OCI-LY7 (cell line): ENCODE measurements at regions of chr3 and their contacts with region 1.

Region 1: GRCh38 chr3:57017459-57017845 is 43.0 kb upstream of the SPATA12 start:
- DNase-seq: peak; percentile 23
- H3K4me3 ChIP-seq: peak overlapping the region; percentile 50
- H3K27ac ChIP-seq: peak overlapping the region; percentile 95
- H3K4me1 ChIP-seq: peaks cover 85% of the 10 kb centered on the region
- CTCF ChIP-seq: no peak

Region 2: GRCh38 chr3:56970461-56970879 is 47.0 kb before region 1 on chr3:
- CTCF ChIA-PET with region 1: no interaction called
- POLR2A ChIA-PET with region 1: interaction called, 3 read pairs
- intact Hi-C with region 1: loop called (anchors 2 kb)
- DNase-seq: peak; percentile 46
- H3K4me3 ChIP-seq: no peak overlapping the region
- H3K27ac ChIP-seq: peak overlapping the region; percentile 44
- H3K4me1 ChIP-seq: peaks cover 32% of the 10 kb centered on the region
- CTCF ChIP-seq: no peak

Region 3: DNA sequence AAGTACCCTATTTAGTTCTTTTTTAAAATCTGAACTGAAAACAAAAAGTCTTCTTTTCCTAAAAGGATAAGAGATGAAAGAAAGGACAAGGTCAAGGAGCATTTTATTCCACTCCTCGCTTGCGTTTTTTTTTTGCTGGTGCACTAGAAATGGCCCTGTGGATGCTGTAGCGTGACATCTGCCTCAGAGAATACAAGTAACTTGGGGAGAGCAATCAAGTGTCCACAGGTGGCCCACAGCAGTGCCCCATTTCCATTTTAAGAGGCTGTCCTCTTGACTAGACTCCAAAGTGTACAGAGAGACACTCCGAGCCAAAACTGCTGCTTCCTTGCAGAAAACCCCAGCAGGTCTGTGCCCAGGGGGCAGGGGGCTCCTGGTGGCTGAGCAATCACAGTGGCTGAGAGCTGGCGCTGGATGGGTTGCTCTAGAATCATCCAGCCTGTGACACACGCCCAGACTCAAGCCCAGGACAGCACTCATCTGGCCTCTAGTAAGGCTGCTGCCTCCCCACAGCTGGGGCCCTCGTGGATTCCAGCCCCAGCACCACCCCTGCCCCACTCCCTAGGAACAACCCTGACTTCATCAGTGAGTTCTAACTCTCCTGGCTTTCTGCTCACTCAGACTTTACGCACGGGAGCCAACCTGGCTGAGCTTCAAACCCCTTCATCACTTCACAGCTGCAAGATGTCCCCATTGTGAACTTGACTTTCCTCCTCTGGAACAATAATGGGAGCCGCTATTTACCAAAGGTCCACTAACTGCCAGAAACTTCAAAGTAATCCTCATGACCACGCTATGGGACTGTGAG is 28.1 kb before region 1 on chr3:
- CTCF ChIA-PET with region 1: no interaction called
- POLR2A ChIA-PET with region 1: no interaction called
- intact Hi-C with region 1: no loop called
- DNase-seq: no peak
- H3K4me3 ChIP-seq: no peak overlapping the region
- H3K27ac ChIP-seq: no peak overlapping the region
- H3K4me1 ChIP-seq: peaks cover 40% of the 10 kb centered on the region
- CTCF ChIP-seq: peak; percentile 6; the same call in 1 of the 2 replicates

Region 4: GRCh38 chr3:57036952-57037351 is 19.5 kb after region 1 on chr3:
- CTCF ChIA-PET with region 1: no interaction called
- POLR2A ChIA-PET with region 1: no interaction called
- intact Hi-C with region 1: no loop called
- DNase-seq: no peak
- H3K4me3 ChIP-seq: no peak overlapping the region
- H3K27ac ChIP-seq: no peak overlapping the region
- H3K4me1 ChIP-seq: peaks cover 25% of the 10 kb centered on the region
- CTCF ChIP-seq: no peak

Region 5: DNA sequence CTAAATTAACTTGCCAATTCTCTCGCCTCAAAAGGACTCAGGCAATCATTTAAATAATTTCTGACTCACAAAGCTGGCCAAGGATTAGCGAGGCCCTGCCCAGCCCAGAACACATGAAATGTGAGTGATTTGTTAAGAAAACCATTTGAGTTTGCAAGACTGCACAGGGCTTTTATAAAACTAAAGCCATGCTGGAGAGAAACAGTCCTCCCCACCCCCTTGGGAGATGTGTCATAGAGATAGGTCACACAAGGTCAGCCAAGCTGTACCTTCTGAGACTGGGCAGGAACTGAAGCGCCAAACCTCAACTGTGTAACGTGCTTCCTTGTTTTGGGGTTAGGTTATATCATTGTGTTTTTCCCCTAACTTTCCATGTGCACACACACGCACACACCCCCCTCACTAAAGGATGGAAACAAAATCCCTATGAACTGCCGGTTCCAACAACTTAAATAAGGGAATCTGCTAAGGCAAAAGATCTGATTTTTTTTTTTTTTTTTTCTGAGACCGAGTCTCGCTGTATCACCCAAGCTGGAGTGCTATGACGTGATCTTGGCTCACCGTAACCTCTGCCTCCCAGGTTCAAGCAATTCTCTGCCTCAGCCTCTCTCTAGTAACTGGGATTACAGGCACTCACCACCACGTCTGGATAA is 51.1 kb after region 1 on chr3:
- CTCF ChIA-PET with region 1: no interaction called
- POLR2A ChIA-PET with region 1: interaction called, 35 read pairs
- intact Hi-C with region 1: loop called (anchors 1 kb)
- DNase-seq: peak; percentile 98
- H3K4me3 ChIP-seq: peak overlapping the region; percentile 44
- H3K27ac ChIP-seq: peak overlapping the region; percentile 88
- H3K4me1 ChIP-seq: peaks cover 87% of the 10 kb centered on the region
- CTCF ChIP-seq: no peak

Region 6: DNA sequence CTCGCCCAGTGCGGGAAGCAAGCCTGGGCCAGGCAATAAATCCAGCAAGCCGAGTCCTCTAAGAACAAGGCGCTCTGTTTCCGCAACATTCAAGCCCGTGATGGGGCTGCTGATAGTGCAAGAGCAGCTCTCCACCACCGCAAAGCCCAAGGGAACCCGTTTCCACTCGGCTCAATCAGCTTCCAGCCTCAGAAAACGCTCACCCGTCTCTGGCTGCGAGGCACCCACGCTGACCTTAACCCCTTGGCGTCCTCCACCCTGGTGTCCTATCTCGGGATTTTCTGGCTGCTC is 60.8 kb after region 1 on chr3:
- CTCF ChIA-PET with region 1: interaction called, 4 read pairs
- POLR2A ChIA-PET with region 1: interaction called, 11 read pairs
- intact Hi-C with region 1: loop called (anchors 1 kb)
- DNase-seq: peak; percentile 84
- H3K4me3 ChIP-seq: peak overlapping the region; percentile 98
- H3K27ac ChIP-seq: peak overlapping the region; percentile 48
- H3K4me1 ChIP-seq: peaks cover 60% of the 10 kb centered on the region
- CTCF ChIP-seq: no peak

Region 7: GRCh38 chr3:57227204-57227929 is 209.9 kb after region 1 on chr3 and contains the start of gene APPL1:
- CTCF ChIA-PET with region 1: no interaction called
- POLR2A ChIA-PET with region 1: no interaction called
- intact Hi-C with region 1: loop called (anchors 10 kb)
- DNase-seq: peak; percentile 95
- H3K4me3 ChIP-seq: peak within 1 kb of the TSS; percentile 90
- H3K27ac ChIP-seq: peak within 1 kb of the TSS; percentile 44
- H3K4me1 ChIP-seq: peaks cover 36% of the 10 kb centered on the region
- CTCF ChIP-seq: no peak
- total RNA-seq, gene APPL1: 43.3 and 45.9 TPM in 2 replicates